IMR-90 (cell line): ENCODE measurements at regions of chr4 and their contacts with region 1.

Region 1: DNA sequence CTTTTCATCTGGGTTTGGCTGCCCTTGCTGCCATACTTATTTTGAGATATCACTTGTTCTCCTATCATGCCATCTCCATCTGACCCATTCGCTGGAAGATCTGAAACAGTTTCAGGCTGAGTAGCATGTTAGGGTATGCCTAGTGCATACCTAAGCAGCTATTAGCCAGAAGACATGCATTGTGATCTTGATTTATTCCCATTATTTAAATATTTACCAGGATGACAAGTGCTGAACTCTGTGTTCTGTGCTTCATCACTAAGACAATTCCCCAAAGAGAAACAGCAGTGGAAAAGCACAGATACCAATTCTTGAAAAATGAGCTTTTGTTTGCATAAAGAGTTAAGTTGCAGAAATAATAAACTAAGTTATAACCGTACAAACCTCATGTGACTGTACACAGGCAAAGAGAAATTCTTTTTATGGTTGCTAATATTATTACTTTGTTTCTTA is 271.0 kb upstream of the ARSJ start:
- DNase-seq: peak; percentile 78
- ATAC-seq: peak; percentile 91
- H3K4me3 ChIP-seq: no peak overlapping the region
- H3K27ac ChIP-seq: peak overlapping the region; percentile 54; the same call in 1 of the 2 replicates
- H3K4me1 ChIP-seq: peaks cover 10% of the 10 kb centered on the region
- H3K27me3 ChIP-seq: no peaks in the 10 kb centered on the region
- CTCF ChIP-seq: no peak
- POLR2A ChIP-seq: no peak
- RAD21 ChIP-seq: no peak

Region 2: GRCh38 chr4:114263233-114263632 is 12.8 kb after region 1 on chr4:
- CTCF ChIA-PET with region 1: interaction called, 5 read pairs
- POLR2A ChIA-PET with region 1: no interaction called
- dilution Hi-C with region 1: no loop called
- in situ Hi-C with region 1: no loop called
- intact Hi-C with region 1: loop called (anchors 1 kb)
- DNase-seq: peak; percentile 81
- ATAC-seq: peak; percentile 89
- H3K4me3 ChIP-seq: no peak overlapping the region
- H3K27ac ChIP-seq: no peak overlapping the region
- H3K4me1 ChIP-seq: no peaks in the 10 kb centered on the region
- H3K27me3 ChIP-seq: no peaks in the 10 kb centered on the region
- CTCF ChIP-seq: no peak
- POLR2A ChIP-seq: no peak
- RAD21 ChIP-seq: no peak